Caco-2 (cell line): ENCODE measurements at regions of chr17 and their contacts with region 1.

Region 1: DNA sequence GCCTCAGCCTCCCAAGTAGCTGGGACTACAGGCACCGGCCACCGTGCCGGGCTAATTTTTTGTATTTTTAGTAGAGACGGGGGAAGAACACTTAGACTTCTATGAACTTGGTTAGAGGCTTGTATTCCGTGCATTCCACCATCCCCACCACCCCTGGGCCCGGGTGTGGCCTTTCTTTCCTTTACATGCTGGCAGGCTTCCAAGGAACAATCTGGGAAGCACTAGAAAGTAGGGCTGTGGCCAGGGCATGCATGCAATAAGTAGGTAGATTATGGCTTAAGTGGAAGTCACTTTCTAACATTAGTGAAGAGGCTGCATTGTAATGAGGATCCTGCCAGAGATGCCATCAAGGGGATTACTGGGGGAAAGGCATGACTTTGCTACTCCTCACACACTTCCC is 171.6 kb downstream of the SHISA6 start:
- DNase-seq: no peak
- H3K4me3 ChIP-seq: no peak overlapping the region
- H3K4me3 Mint-ChIP-seq: no peak overlapping the region
- H3K27ac Mint-ChIP-seq: no peak overlapping the region
- H3K4me1 ChIP-seq: no peaks in the 10 kb centered on the region
- H3K4me1 Mint-ChIP-seq: no peaks in the 10 kb centered on the region
- H3K27me3 ChIP-seq: no peaks in the 10 kb centered on the region
- H3K27me3 Mint-ChIP-seq: no peaks in the 10 kb centered on the region
- CTCF ChIP-seq: no peak

Region 2: GRCh38 chr17:11356371-11356770 is 56.3 kb before region 1 on chr17:
- CTCF ChIA-PET with region 1: no interaction called
- POLR2A ChIA-PET with region 1: no interaction called
- intact Hi-C with region 1: loop called (anchors 10 kb)
- DNase-seq: no peak
- H3K4me3 ChIP-seq: no peak overlapping the region
- H3K4me3 Mint-ChIP-seq: no peak overlapping the region
- H3K27ac Mint-ChIP-seq: no peak overlapping the region
- H3K4me1 ChIP-seq: no peaks in the 10 kb centered on the region
- H3K4me1 Mint-ChIP-seq: no peaks in the 10 kb centered on the region
- H3K27me3 ChIP-seq: no peaks in the 10 kb centered on the region
- H3K27me3 Mint-ChIP-seq: no peaks in the 10 kb centered on the region
- CTCF ChIP-seq: no peak

Region 3: DNA sequence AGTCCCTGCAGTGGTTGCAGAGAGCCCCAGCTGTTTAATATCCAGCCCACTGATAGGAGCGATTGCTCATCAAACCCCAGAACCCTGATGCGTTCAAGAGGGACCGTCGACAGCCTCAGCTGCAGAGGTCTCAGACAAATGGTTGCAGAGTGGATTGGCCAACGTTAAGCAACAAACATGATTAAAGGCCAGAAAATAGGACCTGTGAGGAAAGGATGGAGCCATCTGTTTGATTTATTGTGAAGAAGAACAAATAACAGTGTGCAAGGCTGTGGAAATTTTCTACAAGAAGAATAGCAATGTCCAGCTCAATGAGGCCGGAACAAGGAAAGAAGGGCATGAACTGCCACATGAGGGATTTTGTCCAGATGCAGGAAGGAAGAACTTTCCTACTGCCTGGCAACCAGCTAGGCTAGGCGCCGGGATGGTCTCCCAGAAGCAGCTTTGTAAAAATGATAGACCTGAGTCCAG is 47.2 kb after region 1 on chr17:
- CTCF ChIA-PET with region 1: no interaction called
- POLR2A ChIA-PET with region 1: no interaction called
- intact Hi-C with region 1: no loop called
- DNase-seq: no peak
- H3K4me3 ChIP-seq: no peak overlapping the region
- H3K4me3 Mint-ChIP-seq: no peak overlapping the region
- H3K27ac Mint-ChIP-seq: no peak overlapping the region
- H3K4me1 ChIP-seq: no peaks in the 10 kb centered on the region
- H3K4me1 Mint-ChIP-seq: no peaks in the 10 kb centered on the region
- H3K27me3 ChIP-seq: no peaks in the 10 kb centered on the region
- H3K27me3 Mint-ChIP-seq: no peaks in the 10 kb centered on the region
- CTCF ChIP-seq: no peak

Region 4: GRCh38 chr17:11598274-11599221 is 185.9 kb after region 1 on chr17 and contains the start of gene DNAH9:
- CTCF ChIA-PET with region 1: no interaction called
- POLR2A ChIA-PET with region 1: no interaction called
- intact Hi-C with region 1: no loop called
- DNase-seq: peak; percentile 79 to 85
- H3K4me3 ChIP-seq: peak within 1 kb of the TSS; percentile 24
- H3K4me3 Mint-ChIP-seq: peak within 1 kb of the TSS; percentile 58
- H3K27ac Mint-ChIP-seq: no peak within 1 kb of the TSS
- H3K4me1 ChIP-seq: no peaks in the 10 kb centered on the region
- H3K4me1 Mint-ChIP-seq: no peaks in the 10 kb centered on the region
- H3K27me3 ChIP-seq: no peaks in the 10 kb centered on the region
- H3K27me3 Mint-ChIP-seq: peaks cover 6% of the 10 kb centered on the region
- CTCF ChIP-seq: no peak
- total RNA-seq, gene DNAH9: not detected in 2 replicates